Sciatic nerve (tissue), 2 donors: ENCODE measurements at regions of chr5 and their contacts with region 1.

Region 1: DNA sequence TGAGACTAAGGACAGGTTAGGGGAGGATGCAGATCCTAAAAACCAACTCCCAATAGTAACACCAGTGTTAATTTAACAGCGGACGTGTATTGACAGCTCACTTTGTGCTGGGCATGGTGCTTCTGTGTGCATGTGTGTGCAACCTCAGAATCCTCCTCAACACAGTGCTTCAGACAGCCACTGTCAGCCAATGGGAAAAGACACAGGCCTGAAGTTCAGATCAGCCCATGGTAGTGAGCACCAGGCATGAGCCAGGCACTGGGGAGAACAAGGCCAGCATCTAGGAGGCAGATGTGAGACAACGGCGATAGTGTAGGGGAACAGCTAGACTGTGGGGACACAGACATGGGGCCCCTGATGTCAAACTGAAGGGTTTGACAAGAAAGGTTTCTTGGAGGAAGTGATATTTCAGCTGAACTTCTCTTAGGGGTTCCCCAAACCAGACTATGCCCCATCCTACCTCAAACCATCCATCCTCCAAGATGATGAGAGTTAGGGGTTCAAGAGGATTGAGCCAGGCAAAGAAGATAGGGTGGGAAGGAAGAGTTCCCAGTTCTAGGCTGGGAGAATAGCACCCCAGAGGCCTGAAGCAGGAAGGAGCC is 71.5 kb upstream of the PSD2 start:
- DNase-seq: no peak
- ATAC-seq: no peak

Region 2: GRCh38 chr5:138504799-138505198 is 1219.3 kb before region 1 on chr5:
- intact Hi-C with region 1: no loop called
- DNase-seq: no peak
- ATAC-seq: no peak

Region 3: DNA sequence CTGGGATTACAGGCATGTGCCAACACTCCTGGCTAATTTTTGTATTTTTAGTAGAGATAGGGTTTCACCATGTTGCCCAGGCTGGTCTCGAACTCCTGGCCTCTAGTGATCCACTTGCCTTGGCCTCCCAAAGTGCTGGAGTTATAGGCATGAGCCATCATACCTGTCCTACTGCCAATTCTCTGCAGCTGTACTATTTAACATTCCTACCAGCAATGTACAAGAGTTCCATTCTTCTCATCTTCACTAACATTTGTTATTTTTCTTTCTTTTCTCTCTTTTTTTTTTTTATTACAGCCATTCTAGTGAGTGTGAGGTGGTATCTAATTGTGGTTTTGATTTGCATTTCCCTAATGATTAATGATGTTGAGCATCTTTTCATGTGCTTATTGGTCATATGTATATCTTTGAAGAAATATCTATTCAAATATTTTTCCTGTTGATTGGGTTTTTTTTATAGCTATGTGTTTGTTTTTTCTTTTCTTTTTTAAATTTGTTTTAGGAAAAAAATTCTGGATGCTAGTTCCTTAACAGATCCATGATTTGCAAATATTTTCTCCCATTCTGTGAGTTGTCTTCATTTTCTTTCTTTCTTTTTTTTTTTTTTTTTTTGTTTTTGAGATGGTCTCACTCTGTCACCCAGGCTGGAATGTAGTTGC is 694.9 kb after region 1 on chr5:
- intact Hi-C with region 1: loop called (anchors 5 kb)
- DNase-seq: no peak
- ATAC-seq: no peak